Right ventricle myocardium inferior (tissue), 1 donor: ENCODE measurements at regions of chr7 and their contacts with region 1.

Region 1: DNA sequence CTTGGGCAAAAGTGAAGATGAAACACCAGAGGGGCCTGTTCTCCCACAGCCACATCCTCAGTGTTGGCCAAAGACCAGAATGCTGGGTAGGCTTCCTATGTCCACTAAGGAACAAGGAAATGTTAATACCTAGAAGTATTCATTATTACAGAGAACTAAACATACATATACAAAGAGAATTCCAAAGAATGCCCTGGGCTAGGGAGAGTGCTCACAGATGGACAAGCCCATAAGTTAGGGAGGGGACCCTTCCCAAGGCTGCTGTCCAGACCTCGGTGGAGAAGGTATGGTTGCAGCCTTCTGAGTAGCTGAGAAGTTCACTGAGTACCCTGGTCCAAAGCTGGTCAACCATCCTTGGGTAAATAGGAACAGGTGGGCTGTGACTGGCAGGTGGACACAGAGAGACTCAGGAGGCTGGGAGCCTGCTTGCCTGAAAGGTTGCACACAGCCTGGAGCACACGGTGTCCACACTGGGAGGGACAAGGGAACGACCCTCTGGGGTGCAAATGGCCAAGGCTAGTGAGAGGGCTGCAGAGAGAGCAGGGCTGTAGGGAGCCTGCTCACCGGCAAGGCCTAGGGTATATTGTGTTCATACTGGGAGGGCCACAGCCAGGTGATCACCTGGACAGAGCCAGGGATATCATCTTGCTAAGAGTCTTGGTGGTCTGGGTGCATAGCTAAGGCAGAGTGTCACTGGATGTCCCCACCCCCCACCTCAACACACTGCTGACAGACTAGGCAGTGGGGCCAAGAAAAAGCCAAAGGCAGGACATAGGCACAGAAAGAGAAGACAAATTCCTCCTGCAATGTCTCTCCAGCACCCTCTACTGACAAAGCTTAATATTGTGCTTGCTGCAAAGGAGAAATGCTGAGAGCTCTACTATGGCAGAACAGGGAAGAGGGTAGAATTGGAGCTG is 40.3 kb downstream of the CPVL start:
- DNase-seq: no peak
- ATAC-seq: peak; percentile 80

Region 2: DNA sequence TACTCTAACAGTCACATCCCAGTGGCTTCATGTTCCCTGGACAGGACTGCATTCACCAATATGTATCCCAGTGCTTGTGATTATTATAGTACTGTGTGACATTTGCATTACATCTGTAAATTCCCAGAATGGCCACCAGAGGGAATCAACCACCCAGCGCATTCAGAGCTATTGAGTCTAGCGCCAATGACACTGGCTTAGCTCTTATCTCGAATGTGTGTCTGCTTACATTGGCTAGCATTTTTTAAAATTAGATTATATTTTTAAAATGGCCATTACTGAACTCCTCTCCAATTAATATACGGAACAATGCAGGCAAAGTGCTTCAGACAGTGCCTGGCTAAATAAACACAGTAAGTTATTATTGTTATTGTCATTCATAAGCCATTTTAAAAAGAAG is 184.2 kb before region 1 on chr7:
- intact Hi-C with region 1: loop called (anchors 1 kb)
- DNase-seq: no peak
- ATAC-seq: peak; percentile 93

Region 3: GRCh38 chr7:28926871-28927597 is 179.0 kb before region 1 on chr7:
- intact Hi-C with region 1: loop called (anchors 1 kb)
- DNase-seq: peak; percentile 80
- ATAC-seq: peak; percentile 91

Region 4: DNA sequence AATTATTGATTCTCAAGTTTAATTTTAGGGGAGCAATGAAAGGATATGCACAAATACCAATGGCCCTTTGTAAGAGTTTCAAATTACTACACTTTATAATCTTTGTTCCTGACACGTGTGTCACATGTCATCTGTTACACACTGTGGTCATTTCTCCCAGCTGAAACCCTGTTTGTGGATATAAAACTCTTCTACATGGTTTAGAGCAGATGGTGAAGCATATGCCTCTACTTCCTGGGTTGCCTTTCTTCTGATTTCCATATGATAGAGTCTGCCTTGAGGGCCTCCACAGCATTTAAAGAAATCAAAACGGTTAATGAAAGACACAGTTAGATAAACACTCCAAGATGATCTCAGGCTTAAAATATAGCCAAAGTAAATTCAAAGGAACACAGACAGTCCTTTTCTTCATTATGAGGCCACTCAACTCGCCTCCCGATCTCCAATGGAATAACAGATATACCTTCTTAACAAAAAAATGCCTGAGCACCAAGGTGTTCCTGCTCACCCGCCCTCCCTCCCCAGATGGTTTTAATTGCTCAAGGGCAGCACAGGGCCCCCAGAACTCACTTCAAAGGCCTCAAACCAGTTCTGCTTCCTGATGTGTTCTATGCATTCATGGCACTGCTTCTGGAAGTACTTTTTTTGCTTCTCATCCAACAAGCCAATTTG is 34.7 kb before region 1 on chr7:
- intact Hi-C with region 1: no loop called
- DNase-seq: no peak
- ATAC-seq: no peak

Region 5: GRCh38 chr7:29189743-29190201 is 83.8 kb after region 1 on chr7:
- intact Hi-C with region 1: no loop called
- DNase-seq: peak; percentile 83
- ATAC-seq: peak; percentile 56